ENCODE measurements at regions of chr14 and their contacts with region 1.

Region 1: DNA sequence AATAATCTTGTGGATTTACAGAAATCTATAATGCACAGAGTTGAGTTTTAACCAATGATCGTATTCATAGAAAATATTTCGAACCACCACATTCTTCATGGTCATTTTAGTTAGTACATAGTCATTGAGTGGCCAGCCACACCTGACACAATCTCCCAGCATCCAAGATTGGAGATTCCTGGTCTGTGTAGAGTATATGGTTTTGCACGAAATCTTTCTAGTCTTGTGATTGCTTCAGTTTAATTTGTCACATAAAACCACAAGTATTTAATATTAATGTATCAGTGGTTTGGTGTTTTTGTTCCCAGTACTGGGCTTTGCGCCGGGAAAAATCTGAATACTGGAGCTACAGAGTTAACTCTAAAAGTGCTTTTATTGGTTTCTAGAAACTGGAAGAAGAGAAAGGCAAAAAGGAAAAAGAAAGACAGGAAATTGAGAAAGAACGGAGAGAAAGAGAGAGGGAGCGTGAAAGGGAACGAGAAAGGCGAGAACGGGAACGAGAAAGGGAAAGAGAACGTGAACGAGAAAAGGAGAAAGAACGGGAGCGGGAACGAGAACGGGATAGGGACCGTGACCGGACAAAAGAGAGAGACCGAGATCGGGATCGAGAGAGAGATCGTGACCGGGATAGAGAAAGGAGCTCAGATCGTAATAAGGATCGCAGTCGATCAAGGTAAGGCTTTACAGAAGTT is 33.4 kb upstream of the PSEN1 start:
- DNase-seq: no peak
- ATAC-seq: no peak
- H3K4me3 Mint-ChIP-seq: no peak overlapping the region
- H3K27ac Mint-ChIP-seq: peak overlapping the region; percentile 69
- H3K4me1 Mint-ChIP-seq: no peaks in the 10 kb centered on the region
- H3K27me3 Mint-ChIP-seq: no peaks in the 10 kb centered on the region

Region 2: GRCh38 chr14:73069585-73069984 is 33.4 kb before region 1 on chr14:
- CTCF ChIA-PET with region 1: interaction called, 3 read pairs
- POLR2A ChIA-PET with region 1: no interaction called
- intact Hi-C with region 1: loop called in 1 of 2 experiments (anchors 5 kb)
- DNase-seq: no peak
- ATAC-seq: no peak
- H3K4me3 Mint-ChIP-seq: no peak overlapping the region
- H3K27ac Mint-ChIP-seq: no peak overlapping the region
- H3K4me1 Mint-ChIP-seq: peaks cover 31% of the 10 kb centered on the region
- H3K27me3 Mint-ChIP-seq: no peaks in the 10 kb centered on the region